Activated naive CD4-positive, alpha-beta T cell treated with anti-CD3 and anti-CD28 coated beads, Interleukin-2, amount 10 ng/mL, durations not matched to agents 7 days and 5 days (primary cell): ENCODE measurements at regions of chr2 and their contacts with region 1.

Region 1: DNA sequence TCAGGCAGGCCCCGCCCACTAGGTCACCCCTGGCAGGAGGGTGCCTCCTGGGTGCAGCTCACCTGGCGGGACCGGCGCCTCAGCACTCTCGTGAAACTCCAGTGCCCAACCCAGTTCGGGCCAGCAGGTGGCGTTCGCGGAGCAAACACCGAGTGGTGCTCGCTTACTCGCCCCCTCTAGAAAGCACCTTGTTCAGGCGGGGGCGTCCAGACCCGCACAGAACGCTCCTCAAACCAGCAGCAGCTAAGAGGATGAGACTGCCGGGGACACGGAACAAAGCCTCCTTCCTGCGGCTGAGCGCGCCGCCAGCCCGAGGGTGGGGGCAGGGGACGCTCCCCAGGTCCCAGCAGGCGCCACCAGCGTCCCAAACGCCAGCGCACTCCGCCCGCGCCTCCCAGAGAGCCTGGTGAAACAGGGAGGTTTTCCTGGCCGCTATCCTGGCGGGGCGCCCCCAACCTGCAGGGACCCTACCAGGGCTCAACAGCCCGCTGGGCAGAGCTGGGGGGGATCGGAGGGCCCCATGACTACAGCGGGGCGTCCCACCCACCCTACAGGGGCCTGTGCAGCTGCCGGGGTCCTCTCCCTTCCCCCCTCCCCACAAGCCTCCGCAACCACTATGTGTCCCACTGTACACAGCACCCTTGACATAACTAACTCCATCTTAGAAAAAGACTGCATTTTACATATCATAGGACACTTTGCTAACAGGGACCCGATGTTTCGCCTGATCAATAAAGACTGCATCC is 44.7 kb downstream of the MRPS5 start:
- DNase-seq: peak; percentile 98
- H3K4me3 Mint-ChIP-seq: peak overlapping the region; percentile 95
- H3K27ac Mint-ChIP-seq: peak overlapping the region; percentile 99
- H3K4me1 Mint-ChIP-seq: peaks cover 83% of the 10 kb centered on the region
- H3K27me3 Mint-ChIP-seq: peaks cover 5% of the 10 kb centered on the region

Region 2: GRCh38 chr2:94956797-94957391 is 120.1 kb before region 1 on chr2:
- CTCF ChIA-PET with region 1: interaction called, 13 read pairs
- DNase-seq: peak; percentile 57
- H3K4me3 Mint-ChIP-seq: no peak overlapping the region
- H3K27ac Mint-ChIP-seq: no peak overlapping the region
- H3K4me1 Mint-ChIP-seq: no peaks in the 10 kb centered on the region
- H3K27me3 Mint-ChIP-seq: peaks cover 32% of the 10 kb centered on the region

Region 3: DNA sequence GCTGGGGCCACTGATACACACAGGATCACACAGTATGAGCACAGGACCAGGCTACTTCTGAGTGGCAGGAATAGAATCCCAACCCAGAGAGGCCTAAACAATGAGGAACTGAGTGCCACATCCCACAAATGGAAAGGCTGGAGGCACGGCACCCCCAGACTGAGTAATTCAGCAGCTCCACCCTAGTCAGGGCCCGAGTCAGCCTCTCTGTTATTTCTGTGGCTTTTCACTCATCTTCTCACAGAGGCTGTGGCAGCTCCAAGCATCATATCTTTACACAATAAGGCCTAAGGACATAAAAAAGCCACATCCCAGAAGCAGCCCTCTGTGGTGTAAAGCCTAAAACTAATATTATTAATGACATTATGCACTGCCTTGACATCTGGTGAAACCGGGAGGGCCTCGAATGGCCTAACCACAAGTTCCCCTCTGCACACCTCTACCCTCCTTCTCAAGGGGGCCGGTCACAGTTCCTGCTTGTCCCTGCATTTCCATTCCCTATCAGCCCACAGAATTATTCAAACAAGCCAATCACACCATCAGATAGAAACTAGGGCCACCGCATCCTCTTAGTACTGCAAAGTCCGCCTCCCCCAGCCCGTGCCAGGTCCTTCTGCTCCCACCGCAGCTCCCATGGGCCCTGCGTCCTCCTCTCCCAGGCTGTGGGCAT is 63.9 kb before region 1 on chr2:
- CTCF ChIA-PET with region 1: interaction called, 11 read pairs
- DNase-seq: no peak
- H3K4me3 Mint-ChIP-seq: no peak overlapping the region
- H3K27ac Mint-ChIP-seq: no peak overlapping the region
- H3K4me1 Mint-ChIP-seq: peaks cover 7% of the 10 kb centered on the region
- H3K27me3 Mint-ChIP-seq: peaks cover 7% of the 10 kb centered on the region

Region 4: DNA sequence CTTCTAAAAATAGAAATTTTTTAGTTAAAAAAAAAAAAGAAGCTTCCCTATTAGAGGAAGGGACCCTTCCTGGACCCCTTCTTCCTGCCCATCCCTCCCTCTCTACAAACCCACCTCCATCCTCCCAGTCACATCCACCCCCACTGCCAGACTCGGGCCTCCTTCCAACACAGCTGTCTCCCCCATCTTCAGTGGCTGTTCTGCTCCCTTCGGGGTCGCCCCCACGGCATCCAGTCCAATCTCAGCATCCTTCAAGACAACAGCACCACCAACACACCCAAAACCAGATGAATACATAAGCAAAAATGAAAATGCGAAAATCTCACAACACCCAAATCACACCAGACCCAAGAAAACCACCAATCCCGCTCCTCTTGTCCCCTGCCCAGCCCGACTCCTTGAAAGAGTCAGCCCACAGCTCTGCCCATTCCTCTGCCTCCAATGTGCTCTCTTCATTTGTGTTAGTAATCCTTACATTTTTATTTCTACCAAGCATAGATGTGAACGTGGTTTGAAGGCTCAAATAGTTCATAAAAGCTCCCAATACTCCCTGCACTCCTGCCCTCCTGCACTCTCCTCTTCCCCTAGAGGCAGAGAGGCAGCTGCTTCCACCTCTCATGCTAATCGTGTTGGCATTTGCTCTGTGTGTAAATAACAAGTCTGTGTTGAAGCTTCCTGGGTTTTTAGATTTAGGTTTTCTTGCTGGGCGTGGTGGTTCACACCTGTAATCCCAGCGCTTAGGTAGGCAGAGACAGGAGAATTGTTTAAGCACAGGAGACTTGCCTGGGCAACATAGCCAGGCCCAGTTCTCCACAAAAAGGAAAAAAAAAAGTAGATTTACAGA is 14.5 kb before region 1 on chr2:
- CTCF ChIA-PET with region 1: interaction called, 205 read pairs
- DNase-seq: no peak
- H3K4me3 Mint-ChIP-seq: peak overlapping the region; percentile 1
- H3K27ac Mint-ChIP-seq: peak overlapping the region; percentile 90
- H3K4me1 Mint-ChIP-seq: peaks cover 54% of the 10 kb centered on the region
- H3K27me3 Mint-ChIP-seq: peaks cover 7% of the 10 kb centered on the region

Region 5: GRCh38 chr2:95121407-95122196 is 44.6 kb after region 1 on chr2 and contains the start of gene MRPS5:
- CTCF ChIA-PET with region 1: interaction called, 102 read pairs
- DNase-seq: peak; percentile 88
- H3K4me3 Mint-ChIP-seq: peak within 1 kb of the TSS; percentile 98
- H3K27ac Mint-ChIP-seq: peak within 1 kb of the TSS; percentile 97
- H3K4me1 Mint-ChIP-seq: peaks cover 45% of the 10 kb centered on the region
- H3K27me3 Mint-ChIP-seq: no peaks in the 10 kb centered on the region

Region 6: GRCh38 chr2:95143838-95144237 is 66.9 kb after region 1 on chr2:
- CTCF ChIA-PET with region 1: no interaction called
- DNase-seq: no peak
- H3K4me3 Mint-ChIP-seq: no peak overlapping the region
- H3K27ac Mint-ChIP-seq: no peak overlapping the region
- H3K4me1 Mint-ChIP-seq: no peaks in the 10 kb centered on the region
- H3K27me3 Mint-ChIP-seq: no peaks in the 10 kb centered on the region